Activated CD8-positive, alpha-beta T cell treated with anti-CD3 and anti-CD28 coated beads for 36 hours (primary cell): ENCODE measurements at regions of chr18 and their contacts with region 1.

Region 1: DNA sequence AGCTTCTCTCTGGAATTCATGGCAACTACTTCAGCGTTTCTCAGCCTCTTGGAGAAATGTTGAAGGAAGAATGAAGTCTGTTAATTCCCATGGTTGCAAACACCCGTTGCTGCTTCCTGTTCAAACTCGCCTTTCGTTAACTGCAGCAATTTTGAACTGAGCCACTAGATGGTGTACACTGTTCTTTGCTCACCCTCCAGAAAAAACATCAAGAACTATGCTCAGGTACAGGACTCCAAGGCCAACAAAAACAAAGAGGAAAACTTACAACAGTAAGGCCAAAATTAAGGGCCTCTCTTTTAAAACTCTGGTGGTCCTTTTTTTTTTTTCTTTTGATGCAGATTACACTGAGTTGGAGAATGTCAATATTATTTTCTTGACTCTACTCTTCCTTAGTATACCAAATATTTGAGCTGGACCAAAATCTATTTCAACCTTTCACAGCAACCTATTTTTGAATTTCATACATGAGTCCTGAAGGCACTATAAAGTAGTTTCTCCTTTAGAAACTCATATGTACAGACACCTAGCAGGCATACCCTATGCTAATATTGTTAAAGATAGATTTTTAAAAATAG is 58.2 kb downstream of the KLHL14 start:
- DNase-seq: peak; percentile 26
- ATAC-seq: peak; percentile 72
- H3K4me3 Mint-ChIP-seq: no peak overlapping the region
- H3K27ac Mint-ChIP-seq: no peak overlapping the region
- H3K4me1 Mint-ChIP-seq: peaks cover 3% of the 10 kb centered on the region
- H3K27me3 Mint-ChIP-seq: no peaks in the 10 kb centered on the region
- CTCF ChIP-seq: peak; percentile 62

Region 2: DNA sequence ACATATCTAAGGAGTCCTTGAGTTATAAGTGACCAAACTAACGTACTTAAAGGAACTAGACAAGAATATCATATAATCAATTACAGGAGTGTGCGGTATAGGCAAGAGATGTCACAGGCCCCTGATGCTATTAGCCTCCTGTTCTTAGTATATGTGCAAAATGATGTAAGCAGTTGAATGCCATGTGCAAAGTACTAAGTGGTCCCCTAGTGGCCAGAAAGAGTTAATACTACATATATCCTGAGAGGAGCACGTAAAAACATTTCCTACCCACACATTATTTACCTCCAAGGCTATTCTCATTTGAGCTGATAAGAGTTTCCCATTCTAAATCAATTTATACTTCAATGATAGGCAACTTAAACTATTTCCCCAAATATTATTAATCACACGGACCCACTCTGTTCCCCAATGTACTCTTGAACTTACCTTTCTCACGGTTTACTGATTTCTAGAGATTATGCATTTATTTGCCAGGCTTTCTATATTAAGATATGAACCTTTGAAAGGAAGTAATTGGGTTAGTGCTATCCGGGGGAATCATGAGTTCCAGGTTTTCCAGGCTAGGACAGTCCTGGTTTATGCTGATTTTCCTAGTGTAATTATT is 216.1 kb after region 1 on chr18:
- CTCF ChIA-PET with region 1: interaction called, 3 read pairs
- POLR2A ChIA-PET with region 1: no interaction called
- intact Hi-C with region 1: loop called (anchors 10 kb)
- DNase-seq: no peak
- ATAC-seq: peak; percentile 74
- H3K4me3 Mint-ChIP-seq: no peak overlapping the region
- H3K27ac Mint-ChIP-seq: no peak overlapping the region
- H3K4me1 Mint-ChIP-seq: no peaks in the 10 kb centered on the region
- H3K27me3 Mint-ChIP-seq: no peaks in the 10 kb centered on the region
- CTCF ChIP-seq: peak; percentile 44